ENCODE measurements at regions of chr10 and their contacts with region 1.

Region 1: GRCh38 chr10:94320285-94320914 is 42.3 kb downstream of the NOC3L start:
- DNase-seq: peak; percentile 50 to 75 (median 63)
- H3K4me3 ChIP-seq: no peak overlapping the region
- H3K27ac ChIP-seq: no peak overlapping the region
- H3K4me1 ChIP-seq: no peaks in the 10 kb centered on the region
- H3K27me3 ChIP-seq: peaks cover 0 to 28% (median 2%) of the 10 kb centered on the region in 5 experiments

Region 2: DNA sequence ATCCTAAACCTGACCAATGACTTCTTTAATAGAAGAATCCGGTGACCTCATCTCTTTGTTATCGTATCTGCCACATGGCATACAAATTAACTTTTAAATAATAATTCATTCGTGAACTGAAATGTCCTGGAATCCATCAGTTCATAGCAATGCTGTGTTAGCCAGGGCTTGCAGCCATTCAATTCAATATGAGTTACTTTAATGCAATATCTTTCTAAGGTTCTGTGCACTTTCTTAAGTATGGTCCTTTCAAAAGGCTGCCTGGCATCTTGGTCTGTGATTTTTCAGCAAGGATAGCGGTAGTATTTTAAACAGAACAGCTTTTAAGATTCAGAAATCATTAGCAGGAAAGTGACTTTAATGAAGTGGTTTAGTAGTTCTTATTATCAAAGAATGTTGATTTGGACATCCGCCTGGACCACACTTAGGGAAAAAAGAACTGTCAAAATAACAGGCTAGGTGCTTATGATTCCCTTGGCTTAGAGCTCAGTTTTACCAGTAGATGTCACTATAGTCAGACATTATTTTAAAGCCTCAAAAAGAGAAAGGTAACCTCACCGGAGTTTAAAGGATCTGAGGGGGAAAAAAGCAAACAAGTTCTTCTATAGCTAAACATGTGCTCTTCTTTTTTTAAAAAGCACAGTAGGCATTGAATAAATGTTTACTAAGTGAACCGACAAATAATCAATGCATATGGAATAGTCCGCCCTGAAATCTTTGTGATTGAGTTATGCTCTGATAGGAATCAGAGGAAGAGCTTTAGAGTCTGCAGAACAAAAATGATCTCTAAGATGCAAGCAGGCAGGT is 403.9 kb before region 1 on chr10:
- CTCF ChIA-PET with region 1: interaction called, 12 read pairs
- POLR2A ChIA-PET with region 1: no interaction called
- DNase-seq: peak in 2 of 3 donors; percentile 22 to 24
- H3K4me3 ChIP-seq: no peak overlapping the region
- H3K27ac ChIP-seq: no peak overlapping the region
- H3K4me1 ChIP-seq: no peaks in the 10 kb centered on the region
- H3K27me3 ChIP-seq: no peaks in the 10 kb centered on the region

Region 3: DNA sequence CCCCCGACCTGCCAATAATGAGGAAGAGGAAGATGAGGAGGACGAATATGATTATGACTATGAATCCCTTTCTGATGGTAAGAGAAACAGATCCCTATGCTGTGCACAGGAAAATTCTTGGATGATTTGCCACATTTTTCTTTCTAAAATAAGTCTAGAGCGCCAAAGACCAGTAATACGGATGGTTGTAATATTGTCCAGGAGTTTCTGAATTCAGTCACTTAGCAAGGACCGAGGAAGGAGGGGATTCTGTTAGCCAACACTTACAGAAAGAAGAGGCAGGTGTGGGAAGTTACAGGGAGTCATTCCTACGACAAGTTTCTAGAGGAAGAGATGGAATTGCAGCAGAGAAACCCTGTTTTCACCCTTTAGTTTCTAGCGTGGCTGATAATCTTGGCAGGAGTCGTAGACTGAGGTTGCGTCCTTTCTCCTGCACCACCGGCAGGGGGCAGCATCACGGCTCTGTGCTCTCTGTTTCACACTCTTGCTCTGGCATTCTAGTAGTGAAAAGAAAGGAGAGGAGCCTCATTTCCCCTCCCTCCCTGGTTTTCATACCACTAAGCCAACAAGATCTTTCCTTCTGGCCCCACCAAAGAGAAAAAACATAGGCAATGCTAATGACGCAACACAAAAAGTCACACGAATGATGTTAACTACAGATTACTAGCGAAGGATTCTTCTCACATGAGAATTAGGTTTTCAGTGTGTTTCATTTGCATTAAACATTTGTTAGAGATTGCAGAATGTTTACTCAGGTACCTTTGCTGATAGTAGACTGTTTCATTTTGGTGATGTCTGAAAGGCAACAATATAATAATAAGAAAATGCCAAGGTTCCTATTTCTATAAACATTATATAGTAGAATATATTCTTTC is 40.3 kb before region 1 on chr10:
- CTCF ChIA-PET with region 1: interaction called, 13 read pairs
- POLR2A ChIA-PET with region 1: no interaction called
- DNase-seq: peak; percentile 59 to 77 (median 71)
- H3K4me3 ChIP-seq: no peak overlapping the region
- H3K27ac ChIP-seq: no peak overlapping the region
- H3K4me1 ChIP-seq: no peaks in the 10 kb centered on the region
- H3K27me3 ChIP-seq: peaks cover 13 to 50% (median 19%) of the 10 kb centered on the region in 5 experiments

Region 4: DNA sequence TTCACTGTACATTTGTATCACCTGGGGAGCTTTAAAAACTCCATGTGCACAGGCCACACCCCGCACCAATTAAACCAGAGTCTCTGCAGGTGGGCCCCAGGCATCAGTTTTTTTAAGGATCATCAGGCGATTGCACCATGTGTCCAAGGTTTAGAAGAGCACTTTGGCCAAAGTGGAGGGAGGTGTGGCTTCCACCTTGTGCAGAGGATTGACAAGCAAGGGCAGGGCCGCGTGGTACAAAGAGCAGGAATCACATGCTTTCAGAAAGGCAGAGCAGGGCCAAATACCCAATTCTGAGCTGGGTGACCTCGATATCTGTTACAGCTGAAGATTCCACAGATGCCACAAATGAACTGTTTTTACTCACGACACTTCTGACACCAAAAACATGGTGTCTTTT is 10.0 kb before region 1 on chr10:
- CTCF ChIA-PET with region 1: interaction called, 16 read pairs
- POLR2A ChIA-PET with region 1: no interaction called
- DNase-seq: no peak
- H3K4me3 ChIP-seq: no peak overlapping the region
- H3K27ac ChIP-seq: no peak overlapping the region
- H3K4me1 ChIP-seq: peaks cover 0 to 1% (median 0%) of the 10 kb centered on the region in 4 experiments
- H3K27me3 ChIP-seq: peaks cover 40 to 97% (median 44%) of the 10 kb centered on the region in 5 experiments

Measured in common myeloid progenitor, CD34-positive (primary cell).